CD14-positive monocyte (primary cell): ENCODE measurements at regions of chr16 and their contacts with region 1.

Region 1: DNA sequence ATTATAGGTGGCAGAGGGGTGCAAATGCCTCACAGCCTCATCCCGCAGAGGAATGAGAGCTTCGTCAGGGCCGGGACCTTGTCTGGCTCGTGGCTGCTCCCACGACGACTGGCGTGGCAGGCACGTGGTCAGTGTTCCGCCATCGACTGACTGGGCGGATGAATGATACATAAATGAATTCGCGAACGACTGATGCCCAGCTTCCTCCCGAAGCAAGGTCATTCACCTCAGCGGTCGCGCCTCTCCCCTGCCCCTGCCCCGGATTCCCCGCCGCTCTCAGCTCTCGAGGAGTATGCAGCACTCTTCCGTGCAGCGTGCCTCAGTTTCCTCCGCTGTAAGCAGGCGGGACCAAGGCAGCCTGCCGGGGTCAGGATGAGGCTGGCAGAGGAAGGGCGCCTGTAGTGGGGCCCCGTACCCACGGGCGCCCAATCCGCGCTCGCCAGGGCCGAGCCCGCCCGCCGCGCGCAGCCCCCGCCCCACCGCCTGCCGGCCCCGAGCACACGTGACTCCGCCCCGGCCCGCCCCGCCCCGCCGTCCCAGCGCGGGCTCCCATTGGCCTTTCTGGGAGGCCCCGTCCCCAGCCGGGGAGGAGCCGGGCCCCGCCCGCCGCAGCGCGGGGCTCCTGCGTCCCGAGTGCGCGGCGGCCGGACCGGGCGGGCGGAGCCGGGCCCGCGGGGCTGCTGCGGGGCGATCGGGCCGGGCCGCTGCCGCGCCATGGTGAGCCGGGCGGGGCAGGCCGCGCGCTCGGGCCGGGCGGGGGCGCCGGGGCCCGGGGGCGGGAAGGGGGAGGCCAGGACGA is at the start of gene SNN:
- DNase-seq: peak; percentile 82 to 87 (median 83)
- H3K4me3 ChIP-seq: peak within 1 kb of the TSS; percentile 79 to 92 (median 91)
- H3K4me3 Mint-ChIP-seq: peak within 1 kb of the TSS; percentile 91 to 92
- H3K27ac ChIP-seq: peak within 1 kb of the TSS; percentile 95 to 96
- H3K27ac Mint-ChIP-seq: peak within 1 kb of the TSS; percentile 94 to 98 (median 97)
- H3K4me1 ChIP-seq: peaks cover 39 to 45% of the 10 kb centered on the region in 2 donors
- H3K4me1 Mint-ChIP-seq: peaks cover 53% of the 10 kb centered on the region
- H3K27me3 ChIP-seq: no peaks in the 10 kb centered on the region
- H3K27me3 Mint-ChIP-seq: peaks cover 14 to 19% (median 18%) of the 10 kb centered on the region in 3 donors
- CTCF ChIP-seq: no peak
- polyA plus RNA-seq, gene SNN: 89.4 to 111 (median 91.7) TPM

Region 2: GRCh38 chr16:11604783-11605558 is 63.1 kb before region 1 on chr16:
- intact Hi-C with region 1: no loop called
- DNase-seq: peak in 1 of 3 donors; percentile 48
- H3K4me3 ChIP-seq: no peak overlapping the region
- H3K4me3 Mint-ChIP-seq: no peak overlapping the region
- H3K27ac ChIP-seq: no peak overlapping the region
- H3K27ac Mint-ChIP-seq: peak overlapping the region in 4 of 7 donors; percentile 6 to 54 (median 25)
- H3K4me1 ChIP-seq: peaks cover 33 to 34% of the 10 kb centered on the region in 2 donors
- H3K4me1 Mint-ChIP-seq: peaks cover 34% of the 10 kb centered on the region
- H3K27me3 ChIP-seq: no peaks in the 10 kb centered on the region
- H3K27me3 Mint-ChIP-seq: peaks cover 0 to 12% (median 6%) of the 10 kb centered on the region in 3 donors
- CTCF ChIP-seq: no peak

Region 3: DNA sequence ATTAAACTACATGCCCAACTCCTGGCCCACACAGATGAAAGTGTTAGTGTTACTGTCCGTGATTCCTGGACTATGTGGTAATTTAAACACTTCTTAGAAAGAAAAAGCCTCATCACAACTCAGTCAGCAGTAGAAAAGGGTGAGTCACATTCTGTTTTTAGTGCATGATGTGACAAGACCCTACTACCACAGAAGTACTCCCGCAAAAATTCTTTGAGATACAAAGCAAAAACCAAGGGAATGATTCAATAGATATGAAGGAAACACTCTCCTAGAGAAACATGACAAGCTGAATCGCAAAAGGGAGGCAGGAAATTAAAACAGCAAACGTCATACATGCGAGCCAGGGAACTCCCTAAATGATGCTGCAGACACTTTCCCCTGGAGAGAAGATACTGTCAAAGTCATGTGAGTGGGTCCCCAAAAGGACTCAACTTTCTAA is 14.7 kb after region 1 on chr16:
- intact Hi-C with region 1: no loop called
- DNase-seq: peak; percentile 49 to 85 (median 61)
- H3K4me3 ChIP-seq: no peak overlapping the region
- H3K4me3 Mint-ChIP-seq: no peak overlapping the region
- H3K27ac ChIP-seq: peak overlapping the region; percentile 12 to 58
- H3K27ac Mint-ChIP-seq: peak overlapping the region; percentile 35 to 82 (median 78)
- H3K4me1 ChIP-seq: peaks cover 50 to 57% of the 10 kb centered on the region in 2 donors
- H3K4me1 Mint-ChIP-seq: peaks cover 57% of the 10 kb centered on the region
- H3K27me3 ChIP-seq: no peaks in the 10 kb centered on the region
- H3K27me3 Mint-ChIP-seq: no peaks in the 10 kb centered on the region
- CTCF ChIP-seq: no peak

Region 4: GRCh38 chr16:11700264-11701029 is 32.4 kb after region 1 on chr16:
- intact Hi-C with region 1: loop called (anchors 2 to 5 kb)
- DNase-seq: peak; percentile 70 to 82 (median 73)
- H3K4me3 ChIP-seq: peak overlapping the region in 1 of 3 experiments; percentile 33
- H3K4me3 Mint-ChIP-seq: peak overlapping the region in 1 of 2 donors; percentile 75
- H3K27ac ChIP-seq: peak overlapping the region; percentile 76 to 77
- H3K27ac Mint-ChIP-seq: peak overlapping the region; percentile 83 to 94 (median 89)
- H3K4me1 ChIP-seq: peaks cover 20 to 24% of the 10 kb centered on the region in 2 donors
- H3K4me1 Mint-ChIP-seq: peaks cover 27% of the 10 kb centered on the region
- H3K27me3 ChIP-seq: no peaks in the 10 kb centered on the region
- H3K27me3 Mint-ChIP-seq: no peaks in the 10 kb centered on the region
- CTCF ChIP-seq: no peak